GM10248 (cell line): ENCODE measurements at regions of chr3 and their contacts with region 1.

Region 1: DNA sequence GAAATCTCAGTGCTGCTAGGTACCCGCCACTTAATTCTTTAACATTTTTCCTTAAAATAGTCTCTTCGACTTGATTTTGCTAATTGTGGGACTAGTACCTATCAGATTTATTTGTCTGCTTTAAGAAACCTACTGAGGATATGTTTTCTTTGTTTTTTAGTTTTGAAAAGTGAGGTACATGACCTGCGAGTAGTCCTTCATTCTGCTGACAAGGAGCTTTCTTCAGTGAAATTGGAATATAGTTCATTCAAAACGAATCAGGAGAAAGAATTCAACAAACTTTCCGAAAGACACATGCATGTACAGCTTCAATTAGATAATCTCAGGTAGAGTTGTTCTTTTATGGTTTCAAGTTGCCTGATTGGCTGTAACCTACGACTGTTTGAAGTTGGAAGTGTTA is 47.0 kb upstream of the TMEM42 start:
- DNase-seq: no peak
- CTCF ChIP-seq: no peak

Region 2: GRCh38 chr3:44825264-44825925 is 10.6 kb after region 1 on chr3:
- CTCF ChIA-PET with region 1: interaction called, 10 read pairs
- POLR2A ChIA-PET with region 1: no interaction called
- DNase-seq: peak; percentile 45
- CTCF ChIP-seq: no peak

Region 3: DNA sequence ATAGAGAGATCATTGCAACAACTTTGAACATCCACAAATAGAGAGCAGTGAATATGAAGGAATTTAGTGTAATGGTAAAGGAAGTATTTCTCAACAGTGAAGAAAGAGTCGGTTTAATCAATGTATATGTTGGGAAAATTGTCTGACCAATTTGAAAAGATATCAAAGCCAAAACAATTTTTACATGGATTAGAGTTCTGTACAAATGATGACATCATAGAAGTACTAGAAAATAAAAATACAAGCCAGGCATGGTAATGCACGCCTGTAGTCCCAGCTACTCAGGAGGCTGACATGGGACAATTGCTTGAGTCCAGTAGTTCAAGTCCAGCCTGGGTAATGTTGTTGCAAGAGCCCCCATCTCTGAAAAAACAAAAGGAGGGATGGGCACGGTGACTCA is 20.9 kb after region 1 on chr3:
- CTCF ChIA-PET with region 1: no interaction called
- POLR2A ChIA-PET with region 1: no interaction called
- DNase-seq: no peak
- CTCF ChIP-seq: no peak

Region 4: DNA sequence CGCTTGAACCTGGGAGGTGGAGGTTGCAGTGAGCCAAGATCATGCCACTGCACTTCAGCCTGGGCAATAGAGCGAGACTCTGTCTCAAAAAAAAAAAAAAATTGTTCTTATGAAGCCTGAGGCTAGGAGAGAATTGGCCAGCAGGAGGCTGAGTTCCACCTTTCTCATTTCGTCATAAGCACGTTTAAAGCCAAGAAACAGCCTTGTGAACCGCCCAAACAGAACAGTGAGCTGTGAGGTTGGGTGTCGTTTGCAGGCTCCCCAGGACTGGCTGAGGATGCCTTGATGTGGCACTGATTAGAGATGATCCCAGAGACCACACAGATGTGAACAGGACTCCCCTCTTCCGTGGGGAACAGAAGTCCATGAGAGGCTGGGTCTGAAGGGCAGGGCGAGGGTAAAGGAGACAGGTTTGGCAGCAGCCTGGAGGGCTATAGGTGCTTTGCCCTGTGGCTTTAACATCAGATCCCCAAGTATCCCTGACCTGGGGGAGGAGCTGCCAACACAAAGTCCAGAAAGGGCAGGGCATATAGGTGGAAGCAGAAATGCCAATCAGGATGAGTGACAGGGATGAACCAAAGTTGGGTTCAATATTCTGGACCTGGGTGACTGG is 264.3 kb after region 1 on chr3:
- CTCF ChIA-PET with region 1: no interaction called
- POLR2A ChIA-PET with region 1: no interaction called
- DNase-seq: no peak
- CTCF ChIP-seq: no peak